Natural killer cell (primary cell): ENCODE measurements at regions of chr10 and their contacts with region 1.

Region 1: DNA sequence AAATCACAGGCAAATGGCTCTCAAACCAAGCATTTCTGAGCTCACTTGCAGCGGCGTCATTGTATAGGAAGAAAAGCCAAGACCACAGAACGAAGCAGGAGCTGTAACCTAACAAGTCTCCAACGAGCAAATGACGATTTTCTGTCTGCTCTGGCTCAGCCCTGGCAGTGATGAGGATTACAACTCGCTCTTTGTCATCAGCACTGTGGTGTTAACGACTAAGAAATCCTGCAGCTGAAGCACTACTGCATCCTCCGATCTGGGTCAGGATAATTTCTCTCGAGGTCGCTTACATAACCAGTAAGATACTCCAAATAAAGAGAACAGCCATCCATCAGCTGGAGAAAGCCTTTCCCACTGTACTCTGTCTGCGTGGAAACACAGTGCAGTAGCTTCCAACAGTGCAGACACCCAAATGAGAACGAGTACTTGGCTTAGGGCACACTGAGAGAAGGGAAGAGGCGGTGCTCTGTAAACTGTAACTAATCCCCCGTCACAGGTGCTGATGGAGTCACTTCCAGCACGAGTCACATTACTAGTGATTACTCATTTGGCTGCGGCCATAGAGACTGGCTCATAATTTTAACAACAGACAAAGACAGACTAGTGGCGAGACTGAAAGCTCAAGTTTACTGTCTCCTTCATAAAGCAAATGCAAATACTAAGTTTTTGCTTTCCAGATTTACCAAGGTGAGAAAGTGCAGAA is 135.8 kb downstream of the NRBF2 start:
- DNase-seq: peak; percentile 71 to 94
- ATAC-seq: peak; percentile 86 to 98 (median 93)
- H3K4me3 ChIP-seq: peak overlapping the region; percentile 51
- H3K4me3 Mint-ChIP-seq: peak overlapping the region; percentile 98
- H3K27ac ChIP-seq: peak overlapping the region; percentile 81
- H3K27ac Mint-ChIP-seq: peak overlapping the region; percentile 96 to 98
- H3K4me1 ChIP-seq: peaks cover 3% of the 10 kb centered on the region
- H3K4me1 Mint-ChIP-seq: peaks cover 13 to 35% of the 10 kb centered on the region in 2 donors
- H3K27me3 ChIP-seq: no peaks in the 10 kb centered on the region
- H3K27me3 Mint-ChIP-seq: no peaks in the 10 kb centered on the region
- CTCF ChIP-seq: peak; percentile 31

Region 2: DNA sequence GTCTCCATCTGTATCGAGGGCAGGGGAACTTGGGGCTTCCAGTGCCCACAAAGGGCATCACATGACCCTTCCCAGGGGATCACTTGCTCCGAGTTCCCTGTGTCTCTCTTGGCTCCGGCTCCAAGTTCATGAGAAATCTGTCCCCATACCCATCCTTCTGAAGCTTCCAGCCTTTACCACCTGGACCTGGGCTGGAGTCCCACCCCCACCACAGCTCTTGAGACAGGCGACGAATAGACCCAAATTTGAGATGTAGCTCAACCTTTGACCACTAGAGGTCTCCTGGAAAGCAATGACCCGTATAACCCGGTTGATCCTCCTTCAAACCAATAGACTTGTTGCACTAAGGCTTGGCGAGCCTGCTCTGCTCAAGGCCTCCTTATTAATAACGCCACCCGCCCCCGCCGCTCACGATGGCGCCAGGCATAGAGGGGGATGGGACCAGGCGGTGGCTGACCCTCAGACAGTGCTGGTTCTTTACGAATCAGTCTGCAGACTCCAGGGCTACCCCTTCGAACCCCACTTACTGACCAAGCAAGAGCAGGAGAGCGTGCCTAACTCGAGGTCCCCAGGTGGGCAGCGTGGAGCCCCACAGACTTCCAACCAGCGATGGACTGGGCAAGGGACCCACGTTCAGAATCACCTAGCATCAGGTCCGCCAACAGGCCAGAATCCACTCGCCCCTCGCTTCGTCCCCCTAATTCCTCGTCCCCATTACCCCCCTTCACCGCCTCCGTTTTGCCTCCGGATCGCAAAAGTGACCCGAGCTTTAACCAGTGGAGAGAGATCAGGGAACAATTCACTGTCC is 1371.9 kb before region 1 on chr10:
- intact Hi-C with region 1: loop called (anchors 5 kb)
- DNase-seq: peak; percentile 35 to 89
- ATAC-seq: peak; percentile 65 to 81 (median 77)
- H3K4me3 ChIP-seq: peak overlapping the region; percentile 13
- H3K4me3 Mint-ChIP-seq: peak overlapping the region; percentile 92
- H3K27ac ChIP-seq: no peak overlapping the region
- H3K27ac Mint-ChIP-seq: peak overlapping the region; percentile 78 to 89
- H3K4me1 ChIP-seq: peaks cover 13% of the 10 kb centered on the region
- H3K4me1 Mint-ChIP-seq: peaks cover 44 to 50% of the 10 kb centered on the region in 2 donors
- H3K27me3 ChIP-seq: no peaks in the 10 kb centered on the region
- H3K27me3 Mint-ChIP-seq: no peaks in the 10 kb centered on the region
- CTCF ChIP-seq: peak; percentile 74

Region 3: DNA sequence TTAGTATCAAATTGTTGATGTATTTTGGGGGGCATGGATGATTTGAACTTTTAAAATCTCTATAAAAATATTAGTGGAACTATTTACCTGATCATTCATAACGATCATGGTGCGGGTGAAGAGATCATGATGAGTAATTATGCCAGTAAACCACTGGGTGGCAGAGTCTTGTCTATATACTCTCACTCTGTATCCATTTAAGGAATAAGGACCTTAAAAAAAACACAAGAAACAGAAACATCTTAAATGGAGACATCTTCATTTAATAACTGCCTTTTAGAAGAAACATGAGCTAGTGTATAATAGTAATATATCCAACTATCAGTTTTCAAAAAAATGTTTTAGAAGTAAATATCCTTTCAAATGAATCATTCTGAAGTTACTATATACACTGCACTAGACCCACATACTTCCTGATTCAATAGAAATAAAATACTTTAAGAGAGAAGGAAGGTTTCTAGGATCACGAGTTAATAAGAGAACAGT is 51.8 kb before region 1 on chr10:
- intact Hi-C with region 1: loop called (anchors 1 kb)
- DNase-seq: peak in 1 of 2 donors; percentile 77
- ATAC-seq: peak; percentile 86 to 88 (median 87)
- H3K4me3 ChIP-seq: no peak overlapping the region
- H3K4me3 Mint-ChIP-seq: no peak overlapping the region
- H3K27ac ChIP-seq: no peak overlapping the region
- H3K27ac Mint-ChIP-seq: peak overlapping the region; percentile 63 to 73
- H3K4me1 ChIP-seq: peaks cover 5% of the 10 kb centered on the region
- H3K4me1 Mint-ChIP-seq: peaks cover 37 to 44% of the 10 kb centered on the region in 2 donors
- H3K27me3 ChIP-seq: no peaks in the 10 kb centered on the region
- H3K27me3 Mint-ChIP-seq: no peaks in the 10 kb centered on the region
- CTCF ChIP-seq: peak; percentile 77

Region 4: DNA sequence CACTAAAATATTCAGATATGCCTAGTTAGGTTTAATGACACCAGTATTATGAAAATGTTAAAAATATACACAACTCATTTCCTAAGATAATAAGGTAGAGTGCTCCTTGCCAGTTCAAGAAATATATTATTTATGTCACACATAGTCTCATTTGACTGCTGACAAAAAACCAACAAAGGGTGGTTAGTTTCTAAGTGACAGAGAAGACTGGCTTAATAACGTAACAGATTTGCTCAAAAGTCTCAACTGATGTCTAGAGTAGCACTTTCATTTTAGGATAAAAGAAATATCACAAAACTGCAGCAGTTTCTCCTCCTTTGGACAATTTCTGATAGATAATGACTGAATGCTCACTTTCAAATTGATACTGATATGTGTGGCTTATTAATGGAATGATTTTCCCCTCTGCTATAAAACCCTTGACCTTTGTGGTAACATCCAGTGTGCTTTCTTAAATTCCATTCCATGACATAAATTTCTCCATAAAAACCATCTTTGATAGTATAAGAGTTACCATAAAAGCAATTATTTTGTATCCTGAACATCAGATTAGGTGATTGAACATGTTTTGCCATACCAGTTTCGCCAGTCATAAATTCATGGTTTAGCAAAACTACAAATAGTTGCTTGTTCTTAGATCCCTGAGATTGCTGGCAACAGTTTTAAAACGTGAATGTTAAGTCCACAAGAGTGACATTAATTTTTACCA is 41.6 kb before region 1 on chr10:
- intact Hi-C with region 1: loop called (anchors 2 kb)
- DNase-seq: peak in 1 of 2 donors; percentile 54
- ATAC-seq: peak in 1 of 3 donors; percentile 43
- H3K4me3 ChIP-seq: no peak overlapping the region
- H3K4me3 Mint-ChIP-seq: peak overlapping the region; percentile 14
- H3K27ac ChIP-seq: no peak overlapping the region
- H3K27ac Mint-ChIP-seq: peak overlapping the region; percentile 56 to 85
- H3K4me1 ChIP-seq: peaks cover 16% of the 10 kb centered on the region
- H3K4me1 Mint-ChIP-seq: peaks cover 26 to 39% of the 10 kb centered on the region in 2 donors
- H3K27me3 ChIP-seq: no peaks in the 10 kb centered on the region
- H3K27me3 Mint-ChIP-seq: no peaks in the 10 kb centered on the region
- CTCF ChIP-seq: no peak

Region 5: GRCh38 chr10:63465293-63466143 is 196.6 kb after region 1 on chr10 and contains the start of gene JMJD1C:
- intact Hi-C with region 1: loop called (anchors 5 kb)
- DNase-seq: peak; percentile 64 to 77
- ATAC-seq: peak; percentile 80 to 86 (median 81)
- H3K4me3 ChIP-seq: peak within 1 kb of the TSS; percentile 81
- H3K4me3 Mint-ChIP-seq: peak within 1 kb of the TSS; percentile 97
- H3K27ac ChIP-seq: peak within 1 kb of the TSS; percentile 63
- H3K27ac Mint-ChIP-seq: peak within 1 kb of the TSS; percentile 85 to 93
- H3K4me1 ChIP-seq: peaks cover 8% of the 10 kb centered on the region
- H3K4me1 Mint-ChIP-seq: peaks cover 19 to 25% of the 10 kb centered on the region in 2 donors
- H3K27me3 ChIP-seq: no peaks in the 10 kb centered on the region
- H3K27me3 Mint-ChIP-seq: peaks cover 2 to 7% of the 10 kb centered on the region in 2 donors
- CTCF ChIP-seq: no peak
- total RNA-seq, gene JMJD1C: 125 to 208 (median 156) TPM

Region 6: DNA sequence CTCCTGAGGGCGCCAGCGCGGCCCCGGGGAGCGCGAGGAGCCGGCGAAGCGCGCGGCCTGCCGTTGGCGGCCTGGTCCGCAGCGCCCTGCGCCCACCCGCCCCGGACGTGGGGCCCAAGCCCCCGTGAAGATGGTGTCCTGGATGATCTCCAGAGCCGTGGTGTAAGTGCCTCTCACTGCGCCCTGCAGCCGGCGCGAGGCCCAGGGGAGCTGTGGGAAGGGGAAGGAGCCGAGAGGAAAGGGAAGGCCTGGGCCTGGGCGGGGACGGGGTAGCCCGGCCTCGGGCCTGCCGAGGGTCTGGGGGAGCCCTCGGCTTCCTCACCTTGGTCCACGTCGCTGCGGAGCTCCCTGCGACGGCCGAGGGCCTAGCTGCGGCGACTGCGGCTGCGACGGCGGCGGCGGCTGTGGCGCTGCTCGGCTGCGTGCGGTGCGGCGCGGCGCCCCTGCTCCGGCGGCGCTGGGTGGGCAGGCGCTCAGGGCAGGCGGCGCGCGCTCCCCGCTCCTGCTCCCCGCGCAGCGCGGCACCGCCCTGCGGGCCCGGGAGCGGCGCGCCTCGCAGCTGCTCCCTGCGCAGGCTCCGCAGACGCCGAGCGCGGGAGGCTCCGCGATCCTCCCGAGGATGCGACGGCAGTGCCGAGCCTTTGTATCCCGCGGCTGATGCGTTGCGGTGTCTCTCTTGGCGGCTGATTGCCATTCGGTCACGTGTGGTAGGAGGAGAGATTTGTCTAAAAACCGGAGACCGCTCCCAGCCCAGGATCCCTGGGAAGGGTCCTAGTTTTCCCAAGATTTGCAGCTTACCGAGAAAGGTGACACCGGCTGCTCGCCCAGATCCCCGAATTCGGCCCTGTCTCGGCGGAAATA is 252.7 kb after region 1 on chr10:
- intact Hi-C with region 1: loop called (anchors 2 kb)
- DNase-seq: peak; percentile 49 to 84
- ATAC-seq: peak; percentile 66 to 79 (median 71)
- H3K4me3 ChIP-seq: peak overlapping the region; percentile 84
- H3K4me3 Mint-ChIP-seq: peak overlapping the region; percentile 92
- H3K27ac ChIP-seq: peak overlapping the region; percentile 87
- H3K27ac Mint-ChIP-seq: peak overlapping the region; percentile 79 to 81
- H3K4me1 ChIP-seq: peaks cover 5% of the 10 kb centered on the region
- H3K4me1 Mint-ChIP-seq: peaks cover 27 to 31% of the 10 kb centered on the region in 2 donors
- H3K27me3 ChIP-seq: no peaks in the 10 kb centered on the region
- H3K27me3 Mint-ChIP-seq: no peaks in the 10 kb centered on the region
- CTCF ChIP-seq: no peak